Activated CD8-positive, alpha-beta memory T cell treated with anti-CD3 and anti-CD28 coated beads, Interleukin-2, amount 10 ng/mL, durations not matched to agents 7 days and 5 days (primary cell): ENCODE measurements at regions of chr14 and their contacts with region 1.

Region 1: GRCh38 chr14:76876076-76876475 is 49.9 kb downstream of the LRRC74A start:
- DNase-seq: peak; percentile 55
- ATAC-seq: peak; percentile 82
- H3K4me3 Mint-ChIP-seq: no peak overlapping the region
- H3K27ac Mint-ChIP-seq: no peak overlapping the region
- H3K4me1 Mint-ChIP-seq: no peaks in the 10 kb centered on the region
- H3K27me3 Mint-ChIP-seq: peaks cover 7% of the 10 kb centered on the region

Region 2: DNA sequence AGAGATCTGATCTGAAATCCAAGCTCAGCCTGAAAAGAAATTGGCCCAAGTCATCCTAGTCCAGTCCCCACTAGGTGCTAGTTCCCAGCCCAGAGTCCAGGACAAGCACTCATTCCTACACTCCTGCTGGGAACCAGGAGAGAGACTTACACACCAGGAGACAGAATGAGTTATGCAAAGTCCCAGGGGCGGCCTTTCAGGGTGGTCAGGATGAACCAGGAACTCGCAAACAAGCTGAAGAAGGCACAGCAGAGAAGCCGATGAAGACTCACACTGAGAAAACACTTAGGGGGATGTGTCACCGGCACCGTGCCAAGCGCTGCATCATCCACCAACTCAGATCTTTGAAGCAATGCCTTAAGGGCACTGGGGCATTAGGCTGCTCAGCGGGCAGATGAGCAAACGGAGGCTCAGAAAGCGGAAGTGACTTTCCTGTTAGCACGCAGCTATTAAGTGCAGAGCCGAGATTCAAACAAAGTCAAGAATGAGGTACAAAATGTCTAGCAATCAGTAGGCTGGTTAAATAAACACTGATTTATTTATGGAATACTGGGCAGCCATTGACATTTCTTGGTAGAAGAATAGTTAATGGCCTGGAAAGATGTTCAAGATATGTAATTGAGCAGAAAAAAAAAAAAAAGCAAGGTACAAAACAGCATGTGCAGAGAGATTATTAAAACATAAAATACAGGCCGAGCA is 28.8 kb after region 1 on chr14:
- CTCF ChIA-PET with region 1: interaction called, 117 read pairs
- DNase-seq: peak; percentile 78
- ATAC-seq: peak; percentile 75
- H3K4me3 Mint-ChIP-seq: no peak overlapping the region
- H3K27ac Mint-ChIP-seq: no peak overlapping the region
- H3K4me1 Mint-ChIP-seq: peaks cover 29% of the 10 kb centered on the region
- H3K27me3 Mint-ChIP-seq: peaks cover 7% of the 10 kb centered on the region

Region 3: DNA sequence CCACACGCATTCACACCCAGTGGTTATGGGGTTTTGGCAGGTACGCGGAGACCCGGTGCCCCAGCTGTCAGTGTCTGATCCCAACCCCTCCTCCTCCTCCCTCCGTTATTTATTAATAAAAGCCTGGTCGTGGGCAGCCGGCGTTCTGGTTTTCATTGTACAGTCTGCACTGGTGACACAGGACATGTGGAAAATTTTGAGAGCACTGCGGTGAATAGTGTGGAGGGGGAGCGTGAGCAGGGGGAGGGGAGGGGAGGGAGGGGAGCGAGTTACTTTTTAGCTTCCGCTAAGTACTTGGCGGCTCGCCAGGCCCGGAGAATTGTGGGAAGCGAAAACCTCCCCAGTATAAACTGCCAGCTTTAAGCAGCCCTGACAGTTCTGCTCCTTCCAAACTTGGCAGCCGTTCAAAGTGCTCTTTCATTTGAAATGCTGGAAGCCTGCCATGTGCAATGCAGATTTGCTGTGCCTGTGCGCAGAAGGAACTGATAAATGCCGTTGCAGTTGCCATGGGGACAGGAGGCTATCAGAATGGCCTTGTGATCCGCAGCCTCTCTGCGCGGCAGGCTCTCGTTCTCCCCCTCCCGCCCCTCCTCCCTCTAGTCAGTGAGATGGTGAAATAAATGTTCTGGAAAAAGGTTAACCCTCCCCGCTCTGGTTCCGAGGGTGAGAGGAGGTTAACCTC is 164.1 kb after region 1 on chr14:
- CTCF ChIA-PET with region 1: interaction called, 13 read pairs
- DNase-seq: peak; percentile 94
- ATAC-seq: peak; percentile 74
- H3K4me3 Mint-ChIP-seq: peak overlapping the region; percentile 67
- H3K27ac Mint-ChIP-seq: peak overlapping the region; percentile 97
- H3K4me1 Mint-ChIP-seq: peaks cover 88% of the 10 kb centered on the region
- H3K27me3 Mint-ChIP-seq: no peaks in the 10 kb centered on the region

Region 4: GRCh38 chr14:77067632-77068514 is 191.8 kb after region 1 on chr14:
- CTCF ChIA-PET with region 1: interaction called, 348 read pairs
- DNase-seq: peak; percentile 68
- ATAC-seq: peak; percentile 68
- H3K4me3 Mint-ChIP-seq: no peak overlapping the region
- H3K27ac Mint-ChIP-seq: no peak overlapping the region
- H3K4me1 Mint-ChIP-seq: peaks cover 5% of the 10 kb centered on the region
- H3K27me3 Mint-ChIP-seq: peaks cover 18% of the 10 kb centered on the region

Region 5: GRCh38 chr14:77091518-77091917 is 215.4 kb after region 1 on chr14:
- CTCF ChIA-PET with region 1: interaction called, 71 read pairs
- DNase-seq: no peak
- ATAC-seq: no peak
- H3K4me3 Mint-ChIP-seq: no peak overlapping the region
- H3K27ac Mint-ChIP-seq: no peak overlapping the region
- H3K4me1 Mint-ChIP-seq: peaks cover 9% of the 10 kb centered on the region
- H3K27me3 Mint-ChIP-seq: peaks cover 13% of the 10 kb centered on the region

Region 6: DNA sequence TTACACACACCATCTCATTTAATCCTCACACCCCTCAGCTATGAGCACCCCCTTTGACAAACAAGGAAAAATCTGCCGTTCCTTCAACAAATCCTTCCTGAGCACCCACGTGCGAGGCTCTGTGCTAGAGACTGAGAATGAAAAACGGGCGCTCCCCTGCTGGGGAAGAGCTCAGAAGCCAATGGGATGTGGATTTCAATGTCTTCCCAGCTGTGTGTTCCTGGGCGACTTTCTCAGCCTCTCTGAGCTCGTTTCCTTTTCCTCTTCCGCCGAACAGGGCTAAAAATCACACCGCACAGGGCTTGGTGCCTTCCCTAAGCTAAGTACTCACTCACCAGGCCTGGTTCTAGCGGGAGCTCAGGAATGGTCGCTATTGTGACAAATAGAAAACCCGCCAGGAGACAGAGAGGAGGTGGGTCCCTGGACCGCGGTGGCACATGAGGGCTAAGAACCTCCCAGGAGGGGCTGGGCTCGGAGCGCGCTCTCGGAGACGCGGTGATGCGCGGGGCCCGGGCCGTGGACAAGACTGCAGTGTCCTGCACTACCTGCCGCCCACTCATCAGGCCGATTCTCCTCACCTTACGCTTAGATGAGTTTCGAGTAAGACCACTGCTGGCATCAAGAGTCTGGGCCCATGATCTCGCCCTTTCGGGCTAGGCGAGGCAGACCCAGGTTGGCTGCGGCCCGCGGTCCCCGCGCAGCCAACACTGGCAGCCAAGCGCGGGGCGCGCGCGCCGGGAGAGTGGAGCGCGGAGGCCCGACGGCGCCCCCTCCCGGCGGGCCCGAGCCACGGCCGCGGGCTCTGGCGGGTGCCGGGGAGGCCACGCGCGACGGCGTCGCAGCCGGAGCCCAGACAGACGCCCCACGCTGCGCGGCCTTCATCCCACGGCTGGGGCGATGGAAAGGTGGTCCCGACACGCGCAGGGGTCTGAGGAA is 248.5 kb after region 1 on chr14:
- CTCF ChIA-PET with region 1: interaction called, 10 read pairs
- DNase-seq: peak; percentile 58
- ATAC-seq: peak; percentile 85
- H3K4me3 Mint-ChIP-seq: peak overlapping the region; percentile 62
- H3K27ac Mint-ChIP-seq: no peak overlapping the region
- H3K4me1 Mint-ChIP-seq: peaks cover 35% of the 10 kb centered on the region
- H3K27me3 Mint-ChIP-seq: peaks cover 46% of the 10 kb centered on the region